ENCODE measurements at regions of chr16 and their contacts with region 1.

Region 1: DNA sequence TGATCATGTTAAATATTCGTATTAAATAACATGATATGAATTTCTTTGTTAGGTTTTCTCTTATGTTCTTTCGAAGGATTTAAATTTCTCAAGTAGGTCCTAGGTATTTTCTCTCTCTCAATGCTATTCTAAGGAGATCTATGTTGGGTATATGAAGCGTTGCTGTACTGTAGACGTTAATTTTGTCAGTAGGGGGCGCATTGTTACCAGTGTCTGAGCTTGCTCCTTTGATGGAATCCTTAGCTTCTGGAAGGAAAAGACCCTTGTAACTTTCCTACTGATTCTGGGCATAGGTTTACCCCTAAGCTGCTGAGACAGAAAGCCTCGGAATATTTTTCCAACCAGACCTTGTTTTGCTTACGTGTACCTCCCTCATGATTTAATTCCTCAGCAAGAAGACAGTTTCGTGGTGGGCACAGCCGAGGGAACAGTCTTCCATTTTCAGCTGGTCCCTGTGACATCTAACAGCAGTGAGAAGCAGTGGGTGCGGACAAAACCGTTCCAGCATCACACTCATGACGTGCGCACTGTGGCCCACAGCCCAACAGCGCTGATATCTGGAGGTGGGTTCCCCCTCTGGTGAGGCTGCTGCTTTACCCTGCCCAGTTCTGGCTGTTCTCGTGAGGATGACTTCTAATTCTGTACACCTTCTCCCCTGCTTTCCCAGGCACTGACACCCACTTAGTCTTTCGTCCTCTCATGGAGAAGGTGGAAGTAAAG is 17.9 kb downstream of the UTP4 start:
- DNase-seq: peak; percentile 26 to 95 (median 64)

Region 2: DNA sequence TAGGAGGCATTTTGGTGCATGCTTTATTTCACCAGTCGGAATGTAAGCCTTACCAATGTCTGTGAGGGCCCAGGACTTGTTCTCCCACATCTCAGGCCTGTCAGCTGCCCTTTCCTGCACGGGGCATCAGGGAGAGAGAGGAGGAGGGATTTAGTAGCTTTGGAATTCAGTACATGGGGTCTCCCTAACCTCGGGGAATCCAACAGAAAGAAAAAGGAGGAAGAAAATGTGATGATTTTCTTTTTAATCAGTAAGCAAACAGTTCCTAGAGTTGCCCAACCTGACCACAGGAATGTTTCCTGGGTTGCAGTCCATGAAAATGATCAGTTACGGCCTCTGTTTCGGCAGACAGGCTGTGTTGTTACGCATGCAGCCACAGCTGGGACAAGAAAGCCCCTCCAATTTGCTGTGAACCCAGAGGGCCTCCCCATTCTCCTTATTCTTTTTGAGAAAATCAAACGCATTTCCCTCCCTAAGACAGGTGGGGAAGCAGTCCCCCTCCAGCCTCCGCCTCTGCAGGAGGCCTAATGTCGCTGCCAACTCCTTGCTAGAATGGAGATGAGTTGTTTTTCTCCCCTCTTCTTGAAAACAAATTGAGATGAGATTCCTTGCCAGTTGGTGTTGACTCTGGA is 360.1 kb before region 1 on chr16:
- intact Hi-C with region 1: no loop called
- DNase-seq: peak in 1 of 10 donors; percentile 29

Region 3: GRCh38 chr16:68839831-68840230 is 310.5 kb before region 1 on chr16:
- intact Hi-C with region 1: no loop called
- DNase-seq: no peak

Region 4: GRCh38 chr16:69286941-69287713 is 136.8 kb after region 1 on chr16:
- intact Hi-C with region 1: loop called (anchors 1 kb)
- DNase-seq: no peak